HCT116 (cell line): ENCODE measurements at regions of chr18 and their contacts with region 1.

Region 1: DNA sequence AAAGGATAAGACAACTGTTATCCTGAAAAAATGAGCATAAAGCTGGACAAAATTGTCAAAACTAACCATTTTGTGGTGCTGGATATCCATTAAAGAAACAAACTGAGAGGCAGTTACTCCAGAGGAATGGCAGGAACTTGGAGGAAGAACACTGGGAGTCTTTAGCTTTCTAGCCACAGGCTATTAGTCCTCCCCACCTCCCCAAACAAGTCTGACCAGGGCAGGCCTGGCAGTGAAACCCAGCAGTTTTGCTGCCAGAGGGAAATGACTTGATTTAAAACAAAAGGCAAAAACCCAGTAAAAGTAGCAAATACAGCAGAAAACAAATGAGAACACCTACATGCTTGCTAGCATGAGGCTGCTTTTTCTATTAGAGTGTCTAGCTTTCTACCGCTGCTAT is 34.9 kb downstream of the OSBPL1A start:
- DNase-seq: no peak
- ATAC-seq: no peak
- H3K4me3 ChIP-seq: no peak overlapping the region
- H3K27ac ChIP-seq: no peak overlapping the region
- H3K4me1 ChIP-seq: peaks cover 2 to 7% of the 10 kb centered on the region in 2 experiments; a peak in 2 of 4 replicates
- H3K27me3 ChIP-seq: no peaks in the 10 kb centered on the region
- CTCF ChIP-seq: no peak
- POLR2A ChIP-seq: no peak
- RAD21 ChIP-seq: no peak

Region 2: DNA sequence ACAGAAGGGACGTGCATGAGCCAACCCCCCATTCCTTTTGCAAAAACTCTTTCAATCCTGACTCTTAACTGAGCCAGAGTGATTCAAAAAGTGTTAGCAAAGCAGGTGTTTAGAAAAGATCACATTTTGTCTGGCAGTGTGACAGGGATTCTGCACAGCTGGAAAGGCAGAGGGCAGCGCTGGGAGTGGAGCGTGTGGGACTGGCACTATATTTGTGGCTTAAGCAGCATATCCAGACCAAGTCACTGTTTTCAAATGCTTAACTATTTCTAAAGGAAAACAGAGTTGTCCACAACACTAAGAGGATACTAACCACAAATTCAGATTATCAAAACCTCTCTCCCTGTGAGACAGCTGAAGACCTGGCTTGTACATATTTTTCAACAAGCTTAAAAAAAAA is 204.9 kb before region 1 on chr18:
- CTCF ChIA-PET with region 1: no interaction called
- POLR2A ChIA-PET with region 1: no interaction called
- RAD21 ChIA-PET with region 1: no interaction called
- intact Hi-C with region 1: no loop called
- DNase-seq: no peak
- ATAC-seq: no peak
- H3K4me3 ChIP-seq: no peak overlapping the region
- H3K27ac ChIP-seq: no peak overlapping the region
- H3K4me1 ChIP-seq: peaks cover 7% of the 10 kb centered on the region in 2 experiments; a peak in 3 of 4 replicates
- H3K27me3 ChIP-seq: no peaks in the 10 kb centered on the region
- CTCF ChIP-seq: no peak
- POLR2A ChIP-seq: no peak
- RAD21 ChIP-seq: no peak

Region 3: DNA sequence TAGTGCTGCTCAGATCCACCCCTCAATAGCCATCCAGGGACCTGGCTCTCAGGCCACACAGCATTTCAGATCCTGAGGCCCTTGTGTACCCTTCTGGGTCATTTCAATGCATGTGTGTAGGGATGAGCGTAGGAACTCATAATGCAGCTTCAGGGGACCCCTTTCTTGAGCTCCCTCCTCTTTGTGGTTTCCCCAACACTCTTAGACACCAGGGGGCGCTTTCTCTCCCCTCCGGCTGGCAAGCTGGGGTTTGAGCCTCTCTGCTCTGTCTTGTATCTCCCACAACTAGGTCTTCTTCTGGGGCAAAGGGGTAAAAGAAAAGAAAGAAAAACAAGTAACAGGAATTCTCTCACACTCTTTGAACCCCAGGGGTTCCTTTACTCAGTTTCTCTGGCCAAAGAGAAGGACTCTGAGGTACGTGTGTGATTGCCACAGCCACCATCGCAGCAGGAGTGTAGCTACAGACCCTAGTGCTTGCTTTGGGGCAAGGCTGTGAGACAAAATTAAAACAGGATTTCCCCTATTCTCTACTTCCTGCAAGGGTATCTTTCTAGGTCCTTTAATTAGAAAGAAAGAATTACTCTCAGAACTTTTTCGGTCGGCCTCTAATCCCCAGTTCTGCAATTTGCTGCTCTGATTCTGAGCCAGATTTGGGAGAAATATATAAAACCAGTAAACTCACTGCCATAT is 185.9 kb before region 1 on chr18:
- CTCF ChIA-PET with region 1: interaction called, 9 read pairs
- POLR2A ChIA-PET with region 1: no interaction called
- RAD21 ChIA-PET with region 1: no interaction called
- intact Hi-C with region 1: loop called (anchors 5 kb)
- DNase-seq: peak; percentile 35
- ATAC-seq: peak; percentile 85
- H3K4me3 ChIP-seq: no peak overlapping the region
- H3K27ac ChIP-seq: no peak overlapping the region
- H3K4me1 ChIP-seq: peaks cover 0 to 8% of the 10 kb centered on the region in 2 experiments; a peak in 1 of 4 replicates
- H3K27me3 ChIP-seq: no peaks in the 10 kb centered on the region
- CTCF ChIP-seq: peak; percentile 63 to 91 (median 84)
- POLR2A ChIP-seq: no peak
- RAD21 ChIP-seq: peak; percentile 70

Region 4: DNA sequence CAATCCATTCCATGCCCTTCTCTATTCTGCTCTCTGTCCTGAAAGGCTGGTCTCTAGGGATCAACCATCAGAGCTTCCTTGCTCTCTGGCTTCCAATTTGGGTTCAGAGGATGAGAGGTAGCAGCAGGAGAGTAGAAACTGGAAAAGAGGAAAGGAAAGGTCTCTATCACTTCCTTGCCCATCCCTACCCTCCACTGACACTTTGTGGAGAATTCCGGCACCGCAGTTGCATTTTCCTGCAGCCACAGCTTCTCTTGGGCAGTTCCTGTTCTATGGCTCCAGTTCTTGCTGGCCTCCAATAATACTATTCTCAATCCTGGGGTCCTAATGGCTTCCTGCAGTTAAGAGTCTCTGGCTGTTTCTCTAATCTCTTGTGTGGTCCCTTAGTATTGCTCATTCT is 50.4 kb after region 1 on chr18:
- CTCF ChIA-PET with region 1: interaction called, 11 read pairs
- POLR2A ChIA-PET with region 1: no interaction called
- RAD21 ChIA-PET with region 1: no interaction called
- intact Hi-C with region 1: no loop called
- DNase-seq: no peak
- ATAC-seq: 0 out of 2 replicates have a peak, but pooled peaks have one; percentile 36
- H3K4me3 ChIP-seq: no peak overlapping the region
- H3K27ac ChIP-seq: no peak overlapping the region
- H3K4me1 ChIP-seq: no peaks in the 10 kb centered on the region
- H3K27me3 ChIP-seq: no peaks in the 10 kb centered on the region
- CTCF ChIP-seq: peak; percentile 12 to 39 (median 18); a peak in 2 of 6 replicates
- POLR2A ChIP-seq: no peak
- RAD21 ChIP-seq: peak; percentile 55; the same call in 1 of the 2 replicates

Region 5: GRCh38 chr18:24432618-24433017 is 69.9 kb after region 1 on chr18:
- CTCF ChIA-PET with region 1: interaction called, 12 read pairs
- POLR2A ChIA-PET with region 1: no interaction called
- RAD21 ChIA-PET with region 1: interaction called in 1 of 2 experiments, 3 read pairs
- intact Hi-C with region 1: loop called (anchors 10 kb)
- DNase-seq: no peak
- ATAC-seq: no peak
- H3K4me3 ChIP-seq: no peak overlapping the region
- H3K27ac ChIP-seq: no peak overlapping the region
- H3K4me1 ChIP-seq: peaks cover 5 to 10% of the 10 kb centered on the region in 2 experiments; a peak in 3 of 4 replicates
- H3K27me3 ChIP-seq: no peaks in the 10 kb centered on the region
- CTCF ChIP-seq: no peak
- POLR2A ChIP-seq: no peak
- RAD21 ChIP-seq: no peak

Region 6: DNA sequence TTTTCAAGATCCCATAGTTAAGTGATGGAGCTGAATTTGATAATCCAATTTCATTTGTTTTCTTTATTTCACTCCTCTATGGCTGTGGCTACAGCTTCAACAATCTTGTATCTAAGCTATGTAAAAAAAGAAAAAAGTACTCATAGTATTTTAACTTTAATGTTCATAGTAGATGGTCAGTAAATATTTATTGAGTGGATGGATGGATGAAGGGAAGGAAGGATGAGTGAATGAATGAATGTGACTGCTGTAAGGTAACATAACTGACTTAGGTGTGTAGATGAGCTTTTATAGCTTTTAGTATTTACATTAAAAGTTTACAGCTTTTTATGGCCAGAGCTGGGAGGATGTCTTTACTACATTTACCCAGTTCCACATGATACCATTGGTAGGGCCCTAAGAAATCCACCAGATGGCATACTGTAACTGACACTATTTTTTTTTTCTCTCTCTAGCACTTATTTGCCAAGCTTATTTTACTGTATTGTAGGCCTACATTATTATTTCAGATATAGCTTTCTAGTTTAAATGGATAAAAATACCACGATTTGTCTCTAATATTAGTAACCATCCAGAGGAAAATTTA is 84.3 kb after region 1 on chr18:
- CTCF ChIA-PET with region 1: interaction called, 10 read pairs
- POLR2A ChIA-PET with region 1: no interaction called
- RAD21 ChIA-PET with region 1: no interaction called
- intact Hi-C with region 1: no loop called
- DNase-seq: no peak
- ATAC-seq: peak; percentile 52; the same call in 1 of the 2 replicates
- H3K4me3 ChIP-seq: no peak overlapping the region
- H3K27ac ChIP-seq: no peak overlapping the region
- H3K4me1 ChIP-seq: no peaks in the 10 kb centered on the region
- H3K27me3 ChIP-seq: no peaks in the 10 kb centered on the region
- CTCF ChIP-seq: peak in 2 of 3 experiments; percentile 16 to 33; a peak in 3 of 6 replicates
- POLR2A ChIP-seq: no peak
- RAD21 ChIP-seq: no peak

Region 7: DNA sequence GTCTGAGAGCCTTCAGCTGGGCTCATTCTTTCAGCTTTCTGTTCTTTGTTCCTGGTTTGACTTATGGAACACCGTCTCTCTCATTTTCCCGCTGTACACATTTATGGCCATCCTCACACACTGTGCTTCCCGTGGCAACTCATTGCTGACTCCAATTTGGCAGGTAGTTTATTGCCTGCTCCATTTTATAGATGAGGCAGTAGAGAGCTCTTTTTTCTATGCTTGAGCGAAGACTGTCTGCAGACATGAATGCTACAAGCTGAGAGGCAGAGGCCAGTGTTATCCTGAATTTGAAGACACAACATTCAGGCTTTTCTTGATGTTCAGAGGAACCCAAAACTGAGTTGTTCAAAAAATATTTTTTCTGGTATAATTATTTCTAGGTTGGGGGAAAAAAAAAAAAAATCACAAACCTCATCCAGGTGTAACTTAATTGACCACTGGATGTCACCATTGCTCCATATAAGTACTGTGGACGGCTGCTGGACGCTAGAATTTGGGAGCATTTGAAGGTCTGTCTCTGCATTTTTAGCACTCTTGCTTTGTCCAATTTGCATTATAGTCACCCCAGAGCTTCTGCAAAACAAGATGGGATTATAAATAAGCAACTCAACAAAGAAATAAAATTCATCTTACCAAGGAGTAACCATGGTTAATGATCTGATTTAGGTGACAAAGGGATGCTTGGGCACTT is 181.2 kb after region 1 on chr18:
- CTCF ChIA-PET with region 1: interaction called, 3 read pairs
- POLR2A ChIA-PET with region 1: no interaction called
- RAD21 ChIA-PET with region 1: no interaction called
- intact Hi-C with region 1: loop called (anchors 1 kb)
- DNase-seq: peak; percentile 22
- ATAC-seq: peak; percentile 73
- H3K4me3 ChIP-seq: no peak overlapping the region
- H3K27ac ChIP-seq: no peak overlapping the region
- H3K4me1 ChIP-seq: no peaks in the 10 kb centered on the region
- H3K27me3 ChIP-seq: no peaks in the 10 kb centered on the region
- CTCF ChIP-seq: peak; percentile 43 to 75 (median 47); a peak in 5 of 6 replicates
- POLR2A ChIP-seq: no peak
- RAD21 ChIP-seq: peak; percentile 66

Region 8: DNA sequence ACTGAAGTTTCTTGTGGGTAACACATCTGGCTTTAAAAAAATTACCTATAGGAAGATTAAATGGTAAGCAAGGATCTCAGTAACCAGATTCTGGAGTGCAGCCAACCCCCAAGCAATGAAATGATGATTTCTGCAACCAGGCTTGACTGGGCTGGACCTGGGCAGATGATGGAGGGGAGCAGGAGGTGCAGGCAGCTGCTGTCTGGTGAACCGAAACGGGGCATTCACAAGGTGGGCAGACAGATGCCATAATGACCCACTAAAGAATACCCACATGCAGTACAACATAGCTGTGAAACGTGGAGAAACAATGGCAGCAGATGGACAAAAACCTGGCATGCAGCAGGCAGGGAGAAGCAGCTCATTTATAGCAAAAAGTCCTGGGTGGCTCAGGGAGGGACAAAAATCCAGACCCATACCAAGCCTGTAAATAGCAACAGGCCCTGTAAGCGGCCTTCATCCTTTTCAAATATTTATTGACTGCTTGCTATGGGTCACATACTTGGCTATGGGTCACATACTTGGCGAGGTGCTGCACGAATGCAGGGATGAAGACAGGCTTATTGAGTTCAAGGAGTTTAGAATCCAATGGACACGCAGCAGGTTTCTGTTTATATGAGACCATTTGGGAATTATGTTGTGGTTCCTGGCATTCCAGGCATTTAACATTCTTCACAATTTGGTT is 342.3 kb after region 1 on chr18:
- CTCF ChIA-PET with region 1: no interaction called
- POLR2A ChIA-PET with region 1: no interaction called
- RAD21 ChIA-PET with region 1: no interaction called
- intact Hi-C with region 1: no loop called
- DNase-seq: no peak
- ATAC-seq: no peak
- H3K4me3 ChIP-seq: no peak overlapping the region
- H3K27ac ChIP-seq: no peak overlapping the region
- H3K4me1 ChIP-seq: no peaks in the 10 kb centered on the region
- H3K27me3 ChIP-seq: peaks cover 8% of the 10 kb centered on the region; the same call in 1 of the 2 replicates
- CTCF ChIP-seq: no peak
- POLR2A ChIP-seq: no peak
- RAD21 ChIP-seq: no peak

Region 9: GRCh38 chr18:24726727-24727492 is 364.2 kb after region 1 on chr18:
- CTCF ChIA-PET with region 1: interaction called, 8 read pairs
- POLR2A ChIA-PET with region 1: no interaction called
- RAD21 ChIA-PET with region 1: no interaction called
- intact Hi-C with region 1: loop called (anchors 1 kb)
- DNase-seq: peak; percentile 69
- ATAC-seq: peak; percentile 78
- H3K4me3 ChIP-seq: no peak overlapping the region
- H3K27ac ChIP-seq: no peak overlapping the region
- H3K4me1 ChIP-seq: no peaks in the 10 kb centered on the region
- H3K27me3 ChIP-seq: peaks cover 32% of the 10 kb centered on the region
- CTCF ChIP-seq: peak; percentile 64 to 93 (median 79); a peak in 5 of 6 replicates
- POLR2A ChIP-seq: no peak
- RAD21 ChIP-seq: peak; percentile 84